IMR-90 (cell line): ENCODE measurements at regions of chr21 and their contacts with region 1.

Region 1: DNA sequence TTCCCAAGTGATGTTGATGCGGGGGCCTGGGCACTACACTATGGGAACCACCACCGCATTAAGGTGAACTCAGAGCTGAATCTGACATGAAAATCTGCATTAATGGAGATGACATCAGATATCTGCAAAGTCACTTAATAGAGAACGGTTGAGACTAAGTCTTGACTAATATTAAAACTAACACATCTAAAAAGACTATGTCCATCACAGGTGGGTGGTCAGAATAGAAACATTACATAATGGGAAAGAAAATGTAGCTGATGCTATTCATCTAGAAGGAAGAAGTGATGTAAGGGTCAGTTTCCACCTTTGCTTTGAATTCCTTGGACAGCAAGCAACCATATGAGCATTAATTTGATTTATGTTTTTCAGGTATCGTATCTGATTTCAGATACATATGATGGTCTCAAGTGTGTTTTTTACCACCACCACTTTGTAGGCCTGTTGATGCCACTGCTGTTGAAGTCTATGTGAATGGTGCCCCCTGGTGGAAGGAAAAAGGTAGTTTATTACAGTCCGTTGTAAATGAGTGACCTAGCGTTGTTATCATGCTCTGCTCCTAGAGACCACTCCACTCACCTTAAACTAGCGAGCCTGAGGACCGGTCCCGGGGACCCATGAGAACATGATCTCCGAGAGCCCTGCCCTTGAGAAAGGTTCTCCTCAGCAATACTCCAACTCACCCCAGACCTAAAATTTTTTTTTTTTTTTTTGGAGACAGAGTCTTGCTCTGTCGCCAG is 73.5 kb downstream of the BACH1 start:
- DNase-seq: peak; percentile 84
- ATAC-seq: peak; percentile 94
- H3K4me3 ChIP-seq: no peak overlapping the region
- H3K27ac ChIP-seq: no peak overlapping the region
- H3K4me1 ChIP-seq: peaks cover 2% of the 10 kb centered on the region; the same call in 1 of the 2 replicates
- H3K27me3 ChIP-seq: no peaks in the 10 kb centered on the region
- CTCF ChIP-seq: peak; percentile 82
- POLR2A ChIP-seq: no peak
- RAD21 ChIP-seq: peak; percentile 93

Region 2: GRCh38 chr21:29085106-29085752 is 287.0 kb before region 1 on chr21:
- CTCF ChIA-PET with region 1: interaction called, 5 read pairs
- POLR2A ChIA-PET with region 1: no interaction called
- dilution Hi-C with region 1: no loop called
- in situ Hi-C with region 1: loop called (anchors 5 kb)
- intact Hi-C with region 1: loop called (anchors 1 kb)
- DNase-seq: no peak
- ATAC-seq: no peak
- H3K4me3 ChIP-seq: no peak overlapping the region
- H3K27ac ChIP-seq: no peak overlapping the region
- H3K4me1 ChIP-seq: peaks cover 5% of the 10 kb centered on the region
- H3K27me3 ChIP-seq: no peaks in the 10 kb centered on the region
- CTCF ChIP-seq: no peak
- POLR2A ChIP-seq: no peak
- RAD21 ChIP-seq: no peak

Region 3: GRCh38 chr21:29164325-29164942 is 207.8 kb before region 1 on chr21:
- CTCF ChIA-PET with region 1: interaction called, 10 read pairs
- POLR2A ChIA-PET with region 1: no interaction called
- dilution Hi-C with region 1: no loop called
- in situ Hi-C with region 1: loop called (anchors 5 kb)
- intact Hi-C with region 1: loop called (anchors 1 kb)
- DNase-seq: peak; percentile 91
- ATAC-seq: peak; percentile 79
- H3K4me3 ChIP-seq: no peak overlapping the region
- H3K27ac ChIP-seq: no peak overlapping the region
- H3K4me1 ChIP-seq: peaks cover 5% of the 10 kb centered on the region; the same call in 1 of the 2 replicates
- H3K27me3 ChIP-seq: no peaks in the 10 kb centered on the region
- CTCF ChIP-seq: peak; percentile 90
- POLR2A ChIP-seq: 0 out of 2 replicates have a peak, but pooled peaks have one; percentile 34
- RAD21 ChIP-seq: peak; percentile 97

Region 4: DNA sequence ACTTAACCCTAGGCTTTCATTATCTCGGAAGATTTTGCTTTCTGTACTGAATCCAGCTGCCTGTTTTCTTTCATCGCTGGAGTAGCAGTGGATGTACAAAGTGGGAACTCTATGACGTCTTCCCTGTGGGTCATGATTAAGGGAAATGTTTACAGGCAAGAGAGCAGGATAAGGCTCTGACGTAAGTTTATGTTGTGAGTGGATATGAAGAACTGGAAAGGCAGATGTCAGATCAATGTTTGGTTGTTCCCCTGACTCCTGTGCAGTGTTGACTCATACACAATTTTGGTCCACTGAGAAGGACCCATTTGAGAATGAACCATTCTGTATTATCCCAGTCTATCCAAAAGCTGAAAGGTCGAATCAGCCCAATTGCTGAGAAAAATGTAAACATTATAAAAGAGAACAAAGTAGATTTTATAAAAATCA is 275.1 kb after region 1 on chr21:
- CTCF ChIA-PET with region 1: no interaction called
- POLR2A ChIA-PET with region 1: no interaction called
- dilution Hi-C with region 1: no loop called
- in situ Hi-C with region 1: no loop called
- intact Hi-C with region 1: no loop called
- DNase-seq: peak; percentile 97
- ATAC-seq: peak; percentile 72
- H3K4me3 ChIP-seq: no peak overlapping the region
- H3K27ac ChIP-seq: no peak overlapping the region
- H3K4me1 ChIP-seq: peaks cover 4% of the 10 kb centered on the region; the same call in 1 of the 2 replicates
- H3K27me3 ChIP-seq: no peaks in the 10 kb centered on the region
- CTCF ChIP-seq: no peak
- POLR2A ChIP-seq: no peak
- RAD21 ChIP-seq: no peak